CD4-positive, alpha-beta T cell (primary cell): ENCODE measurements at regions of chr7 and their contacts with region 1.

Region 1: DNA sequence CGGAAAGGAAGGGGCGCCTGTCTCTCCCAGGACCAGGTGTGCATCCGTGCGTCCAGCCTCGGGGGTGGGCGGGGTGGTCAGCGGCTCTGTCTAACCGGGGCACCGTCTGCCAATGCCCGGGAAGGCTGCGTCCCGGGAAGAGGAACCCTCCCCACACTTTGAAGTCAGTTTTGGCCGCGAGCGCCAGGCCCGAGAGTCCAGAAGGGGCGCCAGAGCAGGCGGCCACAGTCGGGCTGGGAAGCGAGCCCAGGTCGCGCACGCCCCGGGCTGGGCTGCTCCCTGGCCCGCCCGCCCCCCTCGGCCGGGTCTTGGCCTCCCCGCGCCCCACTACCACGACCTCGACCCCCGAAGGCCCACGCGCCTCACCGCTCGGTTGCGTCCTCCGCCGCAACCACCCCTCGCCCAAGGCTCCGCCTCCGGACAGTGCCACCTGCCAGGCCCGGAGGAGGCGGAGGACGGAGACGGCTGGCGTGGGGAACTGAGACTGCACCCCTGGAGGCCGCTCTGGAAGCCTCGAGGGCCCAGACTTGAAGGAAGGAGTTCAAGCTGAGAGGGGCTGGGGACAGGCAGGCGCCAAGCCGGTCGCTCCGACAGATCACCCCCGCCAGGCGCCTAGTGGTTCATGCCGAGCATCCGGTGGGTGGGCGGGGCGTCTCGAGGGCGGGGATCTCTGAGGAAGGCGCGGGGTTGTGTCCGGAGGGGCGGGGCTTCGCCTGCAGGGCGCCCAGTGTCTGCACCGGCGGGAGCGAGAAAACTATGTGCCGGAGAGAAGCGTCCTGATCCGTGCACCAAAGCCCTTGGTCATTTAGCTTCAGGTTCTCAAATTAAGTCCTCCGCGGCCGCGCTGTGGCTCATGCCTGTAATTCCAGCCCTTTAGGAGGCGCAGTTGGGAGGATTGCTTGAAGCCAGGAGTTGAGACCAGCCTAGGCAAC is at the start of gene BRAT1:
- DNase-seq: peak; percentile 91 to 99 (median 95)
- ATAC-seq: peak; percentile 91
- H3K4me3 ChIP-seq: peak within 1 kb of the TSS; percentile 84
- H3K4me3 Mint-ChIP-seq: peak within 1 kb of the TSS; percentile 94
- H3K27ac ChIP-seq: peak within 1 kb of the TSS; percentile 88 to 99
- H3K27ac Mint-ChIP-seq: peak within 1 kb of the TSS; percentile 84
- H3K4me1 ChIP-seq: peaks cover 55% of the 10 kb centered on the region
- H3K4me1 Mint-ChIP-seq: peaks cover 50% of the 10 kb centered on the region
- H3K27me3 ChIP-seq: no peaks in the 10 kb centered on the region
- H3K27me3 Mint-ChIP-seq: no peaks in the 10 kb centered on the region
- CTCF ChIP-seq: peak; percentile 25
- total RNA-seq, gene BRAT1: 24.1 to 24.5 TPM

Region 2: DNA sequence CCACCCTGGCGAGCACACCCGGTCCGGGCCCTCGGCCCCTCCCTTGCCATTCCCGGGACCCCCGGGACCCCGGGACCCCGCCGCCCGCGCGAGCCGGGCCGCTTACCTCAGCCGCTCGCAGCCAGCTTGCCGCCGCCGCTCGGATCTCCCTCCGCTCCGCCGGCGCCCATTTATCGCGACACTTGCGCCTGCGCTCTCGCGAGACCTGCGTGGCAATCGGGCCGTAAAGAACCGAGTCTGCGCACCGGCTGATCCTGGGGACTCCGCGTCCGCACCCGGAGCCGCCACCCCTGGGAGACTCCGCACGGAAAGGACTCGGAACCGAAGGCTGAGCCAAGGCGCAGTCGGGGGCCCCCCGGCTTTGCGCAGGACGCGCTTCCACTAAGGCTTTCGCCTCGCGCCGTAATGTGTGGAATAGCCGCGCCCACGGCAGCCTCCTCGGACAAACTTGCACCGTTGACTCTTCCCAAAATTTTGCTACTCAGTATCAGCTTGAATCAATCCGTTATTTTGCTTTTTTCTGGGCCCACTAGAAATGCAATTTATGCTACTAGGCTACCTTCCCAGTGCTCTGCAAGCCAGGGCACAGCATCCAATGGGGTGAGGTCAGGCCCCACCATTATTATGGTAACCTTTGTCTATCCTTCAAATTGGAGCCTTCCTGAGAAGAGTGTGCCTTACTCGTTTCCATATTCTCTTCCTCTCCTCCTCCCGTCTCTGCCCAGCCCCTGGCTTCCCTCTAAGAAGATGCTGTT is 322.4 kb before region 1 on chr7 and contains the start of gene MAD1L1:
- CTCF ChIA-PET with region 1: no interaction called
- POLR2A ChIA-PET with region 1: no interaction called
- intact Hi-C with region 1: loop called in 1 of 2 experiments (anchors 5 kb)
- DNase-seq: peak; percentile 81 to 94 (median 86)
- ATAC-seq: peak; percentile 91
- H3K4me3 ChIP-seq: peak within 1 kb of the TSS; percentile 78
- H3K4me3 Mint-ChIP-seq: peak within 1 kb of the TSS; percentile 94
- H3K27ac ChIP-seq: peak within 1 kb of the TSS in 1 of 2 donors; percentile 67
- H3K27ac Mint-ChIP-seq: peak within 1 kb of the TSS; percentile 70
- H3K4me1 ChIP-seq: peaks cover 34% of the 10 kb centered on the region
- H3K4me1 Mint-ChIP-seq: peaks cover 36% of the 10 kb centered on the region
- H3K27me3 ChIP-seq: no peaks in the 10 kb centered on the region
- H3K27me3 Mint-ChIP-seq: no peaks in the 10 kb centered on the region
- CTCF ChIP-seq: no peak
- total RNA-seq, gene MAD1L1: 157 to 160 TPM

Region 3: GRCh38 chr7:2403014-2403717 is 152.2 kb before region 1 on chr7 and contains the start of gene CHST12:
- CTCF ChIA-PET with region 1: no interaction called
- POLR2A ChIA-PET with region 1: no interaction called
- intact Hi-C with region 1: loop called in 1 of 2 experiments (anchors 5 kb)
- DNase-seq: peak; percentile 90 to 99 (median 93)
- ATAC-seq: peak; percentile 76
- H3K4me3 ChIP-seq: peak within 1 kb of the TSS; percentile 76
- H3K4me3 Mint-ChIP-seq: peak within 1 kb of the TSS; percentile 88
- H3K27ac ChIP-seq: peak within 1 kb of the TSS; percentile 35 to 38
- H3K27ac Mint-ChIP-seq: peak within 1 kb of the TSS; percentile 82
- H3K4me1 ChIP-seq: peaks cover 57% of the 10 kb centered on the region
- H3K4me1 Mint-ChIP-seq: peaks cover 54% of the 10 kb centered on the region
- H3K27me3 ChIP-seq: no peaks in the 10 kb centered on the region
- H3K27me3 Mint-ChIP-seq: no peaks in the 10 kb centered on the region
- CTCF ChIP-seq: no peak
- total RNA-seq, gene CHST12: 6.6 to 8.6 TPM

Region 4: GRCh38 chr7:2519119-2519930 is 36.1 kb before region 1 on chr7 and contains the start of gene LFNG:
- CTCF ChIA-PET with region 1: no interaction called
- POLR2A ChIA-PET with region 1: interaction called, 3 read pairs
- intact Hi-C with region 1: loop called in 1 of 2 experiments (anchors 1 kb)
- DNase-seq: peak; percentile 63 to 94 (median 84)
- ATAC-seq: peak; percentile 63
- H3K4me3 ChIP-seq: peak within 1 kb of the TSS; percentile 99
- H3K4me3 Mint-ChIP-seq: peak within 1 kb of the TSS; percentile 95
- H3K27ac ChIP-seq: peak within 1 kb of the TSS; percentile 36 to 88
- H3K27ac Mint-ChIP-seq: peak within 1 kb of the TSS; percentile 84
- H3K4me1 ChIP-seq: peaks cover 51% of the 10 kb centered on the region
- H3K4me1 Mint-ChIP-seq: peaks cover 37% of the 10 kb centered on the region
- H3K27me3 ChIP-seq: no peaks in the 10 kb centered on the region
- H3K27me3 Mint-ChIP-seq: no peaks in the 10 kb centered on the region
- CTCF ChIP-seq: no peak
- total RNA-seq, gene LFNG: 96.7 to 99.8 TPM

Region 5: GRCh38 chr7:2632733-2633537 is 77.5 kb after region 1 on chr7:
- CTCF ChIA-PET with region 1: no interaction called
- POLR2A ChIA-PET with region 1: interaction called, 5 read pairs
- intact Hi-C with region 1: loop called in 1 of 2 experiments (anchors 1 kb)
- DNase-seq: peak in 8 of 14 experiments; percentile 18 to 65 (median 46)
- ATAC-seq: peak; percentile 9
- H3K4me3 ChIP-seq: peak overlapping the region; percentile 85
- H3K4me3 Mint-ChIP-seq: peak overlapping the region; percentile 92
- H3K27ac ChIP-seq: no peak overlapping the region
- H3K27ac Mint-ChIP-seq: peak overlapping the region; percentile 66
- H3K4me1 ChIP-seq: peaks cover 34% of the 10 kb centered on the region
- H3K4me1 Mint-ChIP-seq: peaks cover 20% of the 10 kb centered on the region
- H3K27me3 ChIP-seq: no peaks in the 10 kb centered on the region
- H3K27me3 Mint-ChIP-seq: no peaks in the 10 kb centered on the region
- CTCF ChIP-seq: no peak